ENCODE measurements at regions of chr6 and their contacts with region 1.

Region 1: DNA sequence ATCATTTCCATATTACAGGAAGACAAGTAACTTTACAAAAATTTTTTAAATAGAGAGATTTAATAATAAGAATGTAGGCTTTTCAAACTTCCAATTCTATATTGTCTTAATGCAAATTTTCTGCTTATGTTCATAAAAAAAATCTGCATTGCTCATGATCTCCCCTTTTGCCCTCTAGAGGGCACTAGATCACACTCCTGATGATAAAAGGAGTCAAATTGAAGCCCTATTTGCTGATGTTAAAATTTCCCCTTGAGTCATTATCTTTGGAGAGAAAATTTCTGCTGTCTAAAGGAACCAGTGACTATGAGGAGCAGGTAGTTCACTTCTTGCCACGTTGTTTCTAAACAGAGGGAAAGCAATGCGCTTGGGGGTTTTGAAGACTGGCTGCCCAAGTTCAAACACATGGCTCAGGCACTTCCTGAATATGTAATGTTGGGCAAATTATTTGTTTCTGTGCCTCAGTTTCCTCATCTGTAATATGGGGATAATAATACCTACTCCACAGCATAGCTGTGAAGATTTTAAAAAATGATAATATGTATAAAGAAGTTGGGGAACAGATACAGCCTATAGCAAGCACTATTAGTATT is 874.2 kb downstream of the TFAP2A start:
- DNase-seq: no peak
- H3K4me3 ChIP-seq: no peak overlapping the region
- H3K27ac ChIP-seq: no peak overlapping the region
- H3K4me1 ChIP-seq: no peaks in the 10 kb centered on the region
- H3K27me3 ChIP-seq: no peaks in the 10 kb centered on the region
- CTCF ChIP-seq: peak in 8 of 11 experiments; percentile 17 to 56 (median 48)
- POLR2A ChIP-seq: no peak

Region 2: DNA sequence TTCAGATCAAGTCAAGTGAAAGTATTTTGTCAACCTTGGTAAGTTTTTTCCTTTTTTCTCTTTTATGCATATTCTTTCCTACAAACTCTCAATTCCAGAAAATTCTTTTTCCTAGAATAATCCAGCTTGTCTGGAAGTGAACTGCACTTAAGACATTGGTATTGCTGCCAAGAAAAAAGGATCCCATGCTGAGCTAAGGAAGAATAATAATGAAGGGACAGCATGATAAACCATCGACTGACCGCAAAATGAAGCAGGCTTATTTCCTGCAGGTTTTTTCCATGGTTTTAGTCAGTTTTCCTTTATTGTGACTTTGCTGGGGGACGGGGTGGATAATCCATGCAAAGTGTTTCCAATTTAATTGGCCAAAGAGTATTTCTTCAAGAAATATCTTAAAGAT is 247.7 kb before region 1 on chr6:
- intact Hi-C with region 1: no loop called
- DNase-seq: no peak
- H3K4me3 ChIP-seq: no peak overlapping the region
- H3K27ac ChIP-seq: no peak overlapping the region
- H3K4me1 ChIP-seq: no peaks in the 10 kb centered on the region
- H3K27me3 ChIP-seq: no peaks in the 10 kb centered on the region
- CTCF ChIP-seq: no peak
- POLR2A ChIP-seq: no peak

Region 3: DNA sequence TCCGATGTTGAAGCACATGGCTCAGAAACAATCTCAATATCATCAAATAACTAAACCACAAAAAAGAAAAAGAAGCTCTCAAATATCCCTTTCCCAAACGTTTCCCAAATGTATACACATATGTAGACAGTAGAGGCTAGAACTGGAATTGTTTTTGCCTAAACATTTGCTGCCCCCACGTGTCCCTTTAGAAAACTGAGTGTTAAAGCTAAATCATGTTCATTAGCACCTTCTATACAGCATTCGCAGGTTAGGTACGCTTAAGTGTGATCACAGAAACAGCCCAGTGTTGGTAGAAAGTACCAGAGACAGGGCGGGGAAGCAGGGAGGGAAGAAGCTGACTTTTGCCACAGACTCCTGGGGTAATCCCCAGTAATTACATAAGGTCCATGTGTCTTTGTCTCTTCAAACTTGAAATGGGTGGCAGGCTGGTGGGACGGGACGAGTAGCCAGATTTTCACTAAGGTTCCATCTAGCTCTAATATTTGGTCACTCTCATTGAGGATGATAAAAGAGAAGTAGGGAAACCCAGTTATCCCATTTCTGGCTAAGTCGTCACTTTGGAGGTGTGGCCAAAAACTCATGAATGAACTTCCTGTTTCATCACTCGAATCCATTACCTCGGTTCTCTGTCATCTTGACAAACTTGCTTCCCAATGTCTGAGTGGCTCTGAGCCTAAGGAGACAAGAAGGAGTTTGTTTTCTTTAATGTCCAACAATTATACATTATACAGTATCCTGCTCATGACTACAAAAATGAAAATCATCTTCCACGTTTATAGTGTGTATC is 889.2 kb after region 1 on chr6:
- intact Hi-C with region 1: loop called (anchors 10 kb)
- DNase-seq: no peak
- H3K4me3 ChIP-seq: peak overlapping the region in 1 of 8 donors; percentile 28
- H3K27ac ChIP-seq: no peak overlapping the region
- H3K4me1 ChIP-seq: peaks cover 4 to 26% (median 20%) of the 10 kb centered on the region in 6 donors
- H3K27me3 ChIP-seq: peaks cover 2 to 86% (median 30%) of the 10 kb centered on the region in 7 donors
- CTCF ChIP-seq: peak in 7 of 11 experiments; percentile 20 to 50 (median 34)
- POLR2A ChIP-seq: no peak